Activated T-helper 2 cell treated with anti-CD3 and anti-CD28 coated beads, Interferon-gamma antibody, Interleukin-2, Interleukin-4, amounts not matched to agents 10 μg/mL and 5 μg/mL and 100 μg/mL, durations not matched to agents 14 hours and 24 hours and 36 hours (primary cell): ENCODE measurements at regions of chr3 and their contacts with region 1.

Region 1: GRCh38 chr3:187041362-187042307 is 97.7 kb downstream of the RPL39L start:
- DNase-seq: peak; percentile 61
- H3K4me3 Mint-ChIP-seq: peak overlapping the region; percentile 68
- H3K27ac Mint-ChIP-seq: peak overlapping the region; percentile 99
- H3K4me1 Mint-ChIP-seq: peaks cover 76% of the 10 kb centered on the region
- H3K27me3 Mint-ChIP-seq: no peaks in the 10 kb centered on the region

Region 2: DNA sequence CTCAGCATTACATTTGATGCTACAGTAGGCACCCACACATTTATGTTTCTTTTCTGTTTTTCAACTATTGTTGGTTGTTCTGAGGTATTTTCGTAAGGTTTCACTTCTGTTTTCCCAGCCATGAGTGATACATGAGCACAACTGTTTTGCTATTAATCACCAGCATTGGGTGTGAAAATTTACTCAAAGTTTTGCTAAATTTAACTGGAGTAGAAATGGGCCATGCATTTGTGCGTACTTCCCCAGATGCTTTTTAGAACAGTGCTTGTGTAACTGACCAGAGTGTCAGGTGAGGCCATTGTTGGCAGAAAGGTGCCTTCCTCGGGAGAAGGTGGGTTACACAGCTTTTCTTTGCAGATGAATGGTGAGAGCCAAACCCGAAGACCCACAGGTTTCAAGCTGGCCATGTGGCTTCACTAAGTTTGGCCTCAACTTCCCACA is 40.9 kb before region 1 on chr3:
- intact Hi-C with region 1: loop called (anchors 2 kb)
- DNase-seq: no peak
- H3K4me3 Mint-ChIP-seq: peak overlapping the region; percentile 10
- H3K27ac Mint-ChIP-seq: peak overlapping the region; percentile 73
- H3K4me1 Mint-ChIP-seq: peaks cover 66% of the 10 kb centered on the region
- H3K27me3 Mint-ChIP-seq: no peaks in the 10 kb centered on the region

Region 3: DNA sequence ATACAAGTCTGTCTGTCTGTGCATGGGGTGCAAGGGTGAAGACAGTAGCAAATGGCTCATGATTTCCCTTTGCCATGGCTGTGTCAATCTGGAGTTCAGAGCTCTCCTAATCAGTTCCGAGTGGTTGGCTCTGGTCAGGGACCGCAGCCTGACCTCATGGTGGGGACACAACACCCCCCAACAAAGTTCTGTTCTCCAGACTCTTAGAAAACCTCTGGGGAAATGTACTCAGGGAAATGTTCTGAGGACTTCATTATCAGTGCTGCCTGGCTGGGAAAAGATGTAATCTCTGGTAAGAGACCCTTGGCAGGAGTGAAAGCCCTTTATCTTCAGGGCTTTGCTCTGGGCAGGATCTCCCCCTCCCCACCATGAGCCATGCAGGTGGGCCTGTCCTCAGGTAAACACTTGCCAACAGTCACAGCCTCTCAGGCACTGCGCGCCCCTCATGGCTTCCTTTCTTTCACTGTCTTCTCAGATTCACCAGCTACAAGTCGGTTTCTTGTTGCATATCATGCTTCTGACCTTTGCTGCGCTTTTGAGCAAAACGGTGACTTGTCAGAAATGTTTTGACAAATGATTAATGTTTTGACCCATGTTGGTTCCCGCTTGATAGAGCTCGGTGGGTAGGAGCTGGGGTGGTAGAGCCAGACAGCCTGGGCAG is 15.8 kb before region 1 on chr3:
- intact Hi-C with region 1: loop called (anchors 2 kb)
- DNase-seq: no peak
- H3K4me3 Mint-ChIP-seq: peak overlapping the region; percentile 77
- H3K27ac Mint-ChIP-seq: peak overlapping the region; percentile 89
- H3K4me1 Mint-ChIP-seq: peaks cover 51% of the 10 kb centered on the region
- H3K27me3 Mint-ChIP-seq: no peaks in the 10 kb centered on the region

Region 4: DNA sequence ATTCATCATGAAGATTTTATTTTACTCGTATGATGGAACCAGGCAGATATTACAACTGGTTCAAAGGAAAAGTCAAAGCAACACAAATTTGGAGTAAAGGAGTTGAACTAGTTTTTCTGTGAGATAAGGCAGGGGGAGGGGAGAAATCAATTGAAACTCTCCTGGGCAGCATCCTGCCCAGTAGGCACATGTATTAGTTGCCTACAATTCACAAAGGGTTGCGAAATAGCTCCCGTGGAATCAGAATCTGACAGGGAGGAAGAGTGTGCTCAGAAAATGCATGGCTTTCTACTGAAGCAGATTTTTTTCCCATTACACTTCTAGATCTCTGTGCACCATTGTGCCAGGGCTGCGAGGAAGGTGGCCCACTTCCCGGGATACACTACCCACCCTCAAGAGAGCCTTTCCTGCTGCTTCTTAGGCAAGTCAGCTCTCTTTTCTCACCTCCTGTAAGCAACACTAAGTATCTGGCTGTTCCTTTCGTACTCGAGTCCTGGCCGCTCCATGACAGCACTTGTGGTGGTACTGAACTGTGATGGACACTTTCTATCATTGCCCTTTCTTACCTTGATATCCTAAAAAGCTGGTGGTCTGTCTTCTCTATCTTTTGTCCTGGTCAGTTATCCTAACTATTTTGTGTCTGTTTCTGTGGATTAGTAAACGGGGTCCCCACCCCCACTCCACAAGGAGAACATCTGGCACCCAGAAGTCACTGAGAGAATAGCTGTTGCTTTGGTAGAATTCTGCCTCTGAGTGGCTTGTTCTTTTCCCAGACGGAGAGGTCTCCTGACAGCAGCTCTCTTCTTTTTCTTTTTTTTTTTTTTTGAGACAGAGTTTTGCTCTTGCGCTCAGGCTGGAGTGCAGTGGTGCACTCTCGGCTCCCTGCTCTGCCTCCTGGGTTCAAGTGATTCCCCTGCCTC is 22.8 kb after region 1 on chr3:
- intact Hi-C with region 1: loop called (anchors 2 kb)
- DNase-seq: no peak
- H3K4me3 Mint-ChIP-seq: no peak overlapping the region
- H3K27ac Mint-ChIP-seq: peak overlapping the region; percentile 70
- H3K4me1 Mint-ChIP-seq: peaks cover 52% of the 10 kb centered on the region
- H3K27me3 Mint-ChIP-seq: no peaks in the 10 kb centered on the region

Region 5: GRCh38 chr3:187101184-187102072 is 59.8 kb after region 1 on chr3:
- intact Hi-C with region 1: loop called (anchors 5 kb)
- DNase-seq: peak; percentile 51
- H3K4me3 Mint-ChIP-seq: peak overlapping the region; percentile 23
- H3K27ac Mint-ChIP-seq: peak overlapping the region; percentile 20
- H3K4me1 Mint-ChIP-seq: peaks cover 45% of the 10 kb centered on the region
- H3K27me3 Mint-ChIP-seq: no peaks in the 10 kb centered on the region

Region 6: DNA sequence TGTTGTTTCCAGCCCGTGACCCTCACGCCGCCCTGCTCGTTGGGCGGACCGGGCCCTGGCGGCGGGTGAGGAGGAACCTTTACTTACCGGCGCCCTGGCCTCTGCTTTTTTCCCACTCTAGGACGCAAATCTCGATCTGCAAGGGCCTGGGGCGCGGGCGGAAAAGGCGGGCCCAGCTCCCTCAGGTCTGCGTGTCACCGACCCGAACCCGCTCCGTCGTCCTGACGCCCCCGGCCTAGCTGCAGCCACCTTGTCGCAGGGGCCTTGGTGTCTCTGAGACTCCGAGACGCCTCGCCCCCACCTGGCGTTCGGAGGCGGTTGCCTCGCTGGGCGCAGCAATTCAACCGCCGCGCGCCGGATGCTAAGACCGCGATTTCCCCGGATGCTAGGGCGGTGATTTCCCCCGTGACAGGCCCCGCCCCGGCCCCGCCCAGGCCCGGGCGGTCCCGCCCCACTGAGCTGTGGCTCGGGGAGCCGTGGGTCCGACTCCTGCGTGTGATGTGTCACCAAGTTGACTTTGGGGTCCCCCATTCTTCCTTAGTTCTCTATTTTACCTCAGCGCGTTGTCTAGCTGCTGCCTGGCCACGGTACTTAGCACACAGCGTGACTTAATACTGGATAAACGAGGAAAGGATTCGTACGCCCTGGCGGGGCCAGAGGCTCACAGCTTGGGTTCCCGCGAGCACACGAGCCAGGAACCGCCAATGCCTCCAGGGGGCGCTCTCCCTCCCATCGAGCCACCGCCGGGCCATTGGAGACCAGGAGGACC is 97.7 kb after region 1 on chr3 and contains the start of gene RPL39L:
- intact Hi-C with region 1: loop called (anchors 5 kb)
- DNase-seq: peak; percentile 91
- H3K4me3 Mint-ChIP-seq: peak within 1 kb of the TSS; percentile 89
- H3K27ac Mint-ChIP-seq: peak within 1 kb of the TSS; percentile 94
- H3K4me1 Mint-ChIP-seq: peaks cover 32% of the 10 kb centered on the region
- H3K27me3 Mint-ChIP-seq: no peaks in the 10 kb centered on the region
- total RNA-seq, gene RPL39L: 11.0 and 13.0 TPM in 2 replicates